Activated CD4-positive, alpha-beta memory T cell treated with anti-CD3 and anti-CD28 coated beads for 36 hours (primary cell): ENCODE measurements at regions of chr3 and their contacts with region 1.

Region 1: GRCh38 chr3:192831111-192831644 is 86.5 kb downstream of the MB21D2 start:
- DNase-seq: peak; percentile 64
- H3K4me3 Mint-ChIP-seq: no peak overlapping the region
- H3K27ac Mint-ChIP-seq: peak overlapping the region; percentile 24
- H3K4me1 Mint-ChIP-seq: peaks cover 39% of the 10 kb centered on the region
- H3K27me3 Mint-ChIP-seq: peaks cover 1% of the 10 kb centered on the region

Region 2: DNA sequence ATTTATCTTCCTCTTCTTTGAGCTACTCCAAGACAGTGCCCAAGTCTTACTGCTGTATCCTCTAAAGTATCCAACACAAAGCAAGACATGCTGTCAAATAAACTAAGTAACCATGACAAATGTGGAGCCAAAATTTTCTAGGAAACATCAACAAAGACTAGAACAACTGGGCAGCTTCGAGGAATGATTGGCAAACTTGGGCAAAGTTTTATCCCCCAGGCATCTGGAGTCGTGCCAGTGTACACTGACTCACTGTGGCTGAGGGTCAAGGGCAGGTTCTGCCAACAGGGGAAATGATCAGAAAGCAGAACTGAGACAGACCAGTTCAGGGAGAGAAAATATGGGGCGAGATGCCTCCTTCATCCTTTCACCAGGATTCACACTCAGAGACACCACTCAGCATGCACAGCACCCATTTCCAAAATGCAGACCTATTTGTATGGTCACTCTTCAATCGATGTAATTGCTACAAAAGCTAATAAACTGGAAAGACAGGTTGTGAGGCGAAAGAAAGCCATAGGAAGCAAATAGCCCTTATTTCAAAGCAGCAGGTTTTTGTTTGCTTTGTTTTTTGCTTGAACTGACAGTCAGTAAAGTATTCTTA is 20.7 kb after region 1 on chr3:
- CTCF ChIA-PET with region 1: no interaction called
- POLR2A ChIA-PET with region 1: no interaction called
- intact Hi-C with region 1: loop called (anchors 2 kb)
- DNase-seq: no peak
- H3K4me3 Mint-ChIP-seq: no peak overlapping the region
- H3K27ac Mint-ChIP-seq: no peak overlapping the region
- H3K4me1 Mint-ChIP-seq: peaks cover 57% of the 10 kb centered on the region
- H3K27me3 Mint-ChIP-seq: no peaks in the 10 kb centered on the region